Activated CD8-positive, alpha-beta T cell treated with anti-CD3 and anti-CD28 coated beads for 36 hours (primary cell): ENCODE measurements at regions of chr1 and their contacts with region 1.

Region 1: GRCh38 chr1:5745776-5746610 is 246.2 kb downstream of the NPHP4 start:
- DNase-seq: peak; percentile 63
- ATAC-seq: peak; percentile 87
- H3K4me3 Mint-ChIP-seq: no peak overlapping the region
- H3K27ac Mint-ChIP-seq: no peak overlapping the region
- H3K4me1 Mint-ChIP-seq: no peaks in the 10 kb centered on the region
- H3K27me3 Mint-ChIP-seq: peaks cover 14% of the 10 kb centered on the region
- CTCF ChIP-seq: peak; percentile 88

Region 2: GRCh38 chr1:5151511-5151910 is 594.5 kb before region 1 on chr1:
- CTCF ChIA-PET with region 1: no interaction called
- POLR2A ChIA-PET with region 1: no interaction called
- intact Hi-C with region 1: no loop called
- DNase-seq: no peak
- ATAC-seq: no peak
- H3K4me3 Mint-ChIP-seq: no peak overlapping the region
- H3K27ac Mint-ChIP-seq: no peak overlapping the region
- H3K4me1 Mint-ChIP-seq: no peaks in the 10 kb centered on the region
- H3K27me3 Mint-ChIP-seq: peaks cover 3% of the 10 kb centered on the region
- CTCF ChIP-seq: no peak

Region 3: DNA sequence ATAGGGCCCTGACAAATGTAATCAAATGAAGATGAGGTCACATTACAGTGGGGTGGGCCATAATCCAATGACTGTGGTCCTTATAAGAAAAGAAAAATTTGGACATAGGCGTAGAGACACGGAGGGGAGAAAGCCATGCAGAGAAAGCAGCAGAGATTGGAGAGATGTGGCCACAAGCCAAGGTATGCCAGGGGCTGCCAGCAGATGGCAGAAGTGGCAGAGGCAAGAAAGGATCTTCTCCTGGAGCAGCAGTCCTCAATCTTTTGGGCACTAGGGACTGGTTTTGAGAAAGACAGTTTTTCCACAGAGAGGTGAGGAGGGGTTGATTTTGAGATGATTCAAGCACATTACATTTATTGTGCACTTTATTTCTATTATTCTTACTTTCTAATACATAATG is 108.8 kb before region 1 on chr1:
- CTCF ChIA-PET with region 1: interaction called, 6 read pairs
- POLR2A ChIA-PET with region 1: no interaction called
- intact Hi-C with region 1: loop called (anchors 2 kb)
- DNase-seq: peak; percentile 50
- ATAC-seq: no peak
- H3K4me3 Mint-ChIP-seq: no peak overlapping the region
- H3K27ac Mint-ChIP-seq: no peak overlapping the region
- H3K4me1 Mint-ChIP-seq: peaks cover 2% of the 10 kb centered on the region
- H3K27me3 Mint-ChIP-seq: peaks cover 12% of the 10 kb centered on the region
- CTCF ChIP-seq: peak; percentile 41